Heart right ventricle (tissue), 16 donors: ENCODE measurements at regions of chr3 and their contacts with region 1.

Region 1: DNA sequence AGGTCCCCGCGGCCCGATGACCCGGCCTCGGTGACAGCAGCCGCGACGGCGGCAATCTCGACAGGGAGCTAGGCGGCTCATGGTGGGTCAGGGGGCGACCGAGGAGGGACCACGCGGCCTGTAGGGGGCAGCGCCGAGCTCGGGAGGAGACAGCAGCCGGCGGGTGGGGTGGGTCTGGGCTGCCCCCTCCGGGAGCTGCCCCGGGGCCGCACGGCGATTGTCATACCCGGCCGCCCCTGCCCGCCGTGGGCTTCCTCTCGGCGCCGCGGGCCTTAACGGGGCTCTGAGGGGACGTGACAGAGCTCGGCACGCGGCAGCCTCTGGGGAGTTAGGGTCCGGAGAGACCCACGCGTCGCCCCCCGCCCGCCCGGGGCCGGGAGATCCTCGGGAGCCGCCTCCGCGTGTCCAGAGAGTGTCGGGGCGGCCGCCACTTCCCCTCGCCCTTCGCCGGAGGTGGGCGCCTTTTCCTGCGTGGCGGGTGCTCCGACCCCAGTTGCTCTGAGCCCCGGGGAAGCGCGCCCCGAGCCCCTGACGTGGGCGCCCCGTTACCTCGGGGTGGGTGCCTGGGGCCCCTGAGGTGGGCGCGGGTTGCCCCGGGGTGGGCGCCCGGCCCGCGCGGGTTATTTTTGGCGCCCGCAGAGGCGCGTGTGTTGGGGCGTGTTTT is 539 bp upstream of the PLCL2 start:
- DNase-seq: peak; percentile 74 to 84
- ATAC-seq: peak; percentile 66 to 89 (median 78)
- H3K4me3 ChIP-seq: peak overlapping the region; percentile 76 to 97 (median 86)
- H3K27ac ChIP-seq: peak overlapping the region; percentile 85 to 98 (median 96)
- H3K4me1 ChIP-seq: peaks cover 6 to 65% (median 38%) of the 10 kb centered on the region in 9 donors
- H3K27me3 ChIP-seq: no peaks in the 10 kb centered on the region
- CTCF ChIP-seq: peak; percentile 50 to 79 (median 72)

Region 2: GRCh38 chr3:16768959-16769358 is 115.3 kb before region 1 on chr3:
- intact Hi-C with region 1: loop called in 2 of 10 experiments (anchors 5 to 10 kb)
- DNase-seq: no peak
- ATAC-seq: peak in 1 of 8 donors; percentile 18
- H3K4me3 ChIP-seq: no peak overlapping the region
- H3K27ac ChIP-seq: peak overlapping the region; percentile 40 to 90 (median 75)
- H3K4me1 ChIP-seq: peaks cover 0 to 43% (median 22%) of the 10 kb centered on the region in 9 donors
- H3K27me3 ChIP-seq: no peaks in the 10 kb centered on the region
- CTCF ChIP-seq: no peak

Region 3: DNA sequence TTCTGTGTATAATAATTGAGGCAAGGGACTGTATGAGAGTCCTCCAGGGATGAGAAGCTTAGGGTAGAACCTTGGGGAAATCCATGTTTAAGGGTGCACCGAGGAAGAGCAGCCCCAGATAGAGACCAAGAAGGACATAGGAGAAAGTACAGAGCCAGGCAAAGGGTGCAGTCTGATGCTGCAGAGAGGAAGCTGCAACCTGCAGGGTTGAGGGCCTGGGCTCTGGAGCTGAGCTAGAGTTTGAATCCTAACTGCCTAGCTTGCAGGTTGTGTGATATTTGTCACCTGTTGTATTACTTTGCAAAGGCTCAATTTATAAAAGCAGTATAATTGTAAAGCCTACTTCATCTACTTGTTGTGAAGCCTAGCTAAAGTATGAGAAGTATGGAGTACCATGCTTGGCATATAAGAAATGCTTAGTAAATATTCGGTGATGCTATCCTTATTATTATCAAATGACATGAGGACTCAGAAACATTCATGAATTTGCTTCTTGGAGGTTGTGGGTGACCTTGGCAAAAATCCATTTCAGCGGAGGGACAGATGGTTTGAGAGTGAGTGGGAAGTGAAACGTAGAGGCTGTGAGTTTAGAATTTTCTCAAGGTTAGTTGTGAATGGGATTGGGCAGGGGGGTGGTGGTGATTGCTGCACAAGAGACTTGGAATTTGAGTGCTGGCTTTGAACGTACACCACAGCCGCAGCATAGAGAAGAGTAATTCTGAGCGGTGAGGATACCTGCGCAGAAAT is 44.3 kb after region 1 on chr3:
- intact Hi-C with region 1: loop called in 1 of 10 experiments (anchors 2 kb)
- DNase-seq: no peak
- ATAC-seq: peak in 3 of 8 donors; percentile 15 to 42 (median 33)
- H3K4me3 ChIP-seq: no peak overlapping the region
- H3K27ac ChIP-seq: peak overlapping the region in 1 of 10 donors; percentile 3
- H3K4me1 ChIP-seq: peaks cover 0 to 55% (median 33%) of the 10 kb centered on the region in 9 donors
- H3K27me3 ChIP-seq: no peaks in the 10 kb centered on the region
- CTCF ChIP-seq: no peak

Region 4: GRCh38 chr3:17032407-17033034 is 148.3 kb after region 1 on chr3:
- intact Hi-C with region 1: loop called in 8 of 10 experiments (anchors 5 to 10 kb)
- DNase-seq: no peak
- ATAC-seq: peak in 7 of 8 donors; percentile 37 to 84 (median 66)
- H3K4me3 ChIP-seq: no peak overlapping the region
- H3K27ac ChIP-seq: no peak overlapping the region
- H3K4me1 ChIP-seq: peaks cover 0 to 37% (median 3%) of the 10 kb centered on the region in 9 donors
- H3K27me3 ChIP-seq: no peaks in the 10 kb centered on the region
- CTCF ChIP-seq: peak; percentile 45 to 77 (median 64)

Region 5: DNA sequence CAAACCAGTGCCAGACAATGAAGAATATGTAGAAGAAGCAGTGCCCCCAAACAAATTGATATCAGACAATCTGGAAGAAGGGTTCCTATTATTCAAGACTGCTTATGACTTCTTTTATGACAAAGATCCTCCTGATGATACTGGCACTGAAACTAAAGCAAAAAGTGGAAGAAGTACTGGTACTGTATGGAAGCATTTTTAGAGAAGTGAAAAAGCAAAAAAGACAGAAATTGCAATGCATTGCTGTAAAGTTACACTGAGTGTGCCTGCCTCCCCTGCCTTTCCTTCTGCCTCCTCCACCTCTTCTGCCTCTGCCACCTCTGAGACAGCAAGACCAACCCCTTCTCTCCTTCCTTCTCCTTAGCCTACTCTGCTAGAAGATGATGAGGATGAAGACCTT is 168.1 kb after region 1 on chr3:
- intact Hi-C with region 1: no loop called
- DNase-seq: no peak
- ATAC-seq: peak in 1 of 8 donors; percentile 31
- H3K4me3 ChIP-seq: no peak overlapping the region
- H3K27ac ChIP-seq: peak overlapping the region in 1 of 10 donors; percentile 8
- H3K4me1 ChIP-seq: peaks cover 0 to 47% (median 24%) of the 10 kb centered on the region in 9 donors
- H3K27me3 ChIP-seq: no peaks in the 10 kb centered on the region
- CTCF ChIP-seq: no peak

Region 6: DNA sequence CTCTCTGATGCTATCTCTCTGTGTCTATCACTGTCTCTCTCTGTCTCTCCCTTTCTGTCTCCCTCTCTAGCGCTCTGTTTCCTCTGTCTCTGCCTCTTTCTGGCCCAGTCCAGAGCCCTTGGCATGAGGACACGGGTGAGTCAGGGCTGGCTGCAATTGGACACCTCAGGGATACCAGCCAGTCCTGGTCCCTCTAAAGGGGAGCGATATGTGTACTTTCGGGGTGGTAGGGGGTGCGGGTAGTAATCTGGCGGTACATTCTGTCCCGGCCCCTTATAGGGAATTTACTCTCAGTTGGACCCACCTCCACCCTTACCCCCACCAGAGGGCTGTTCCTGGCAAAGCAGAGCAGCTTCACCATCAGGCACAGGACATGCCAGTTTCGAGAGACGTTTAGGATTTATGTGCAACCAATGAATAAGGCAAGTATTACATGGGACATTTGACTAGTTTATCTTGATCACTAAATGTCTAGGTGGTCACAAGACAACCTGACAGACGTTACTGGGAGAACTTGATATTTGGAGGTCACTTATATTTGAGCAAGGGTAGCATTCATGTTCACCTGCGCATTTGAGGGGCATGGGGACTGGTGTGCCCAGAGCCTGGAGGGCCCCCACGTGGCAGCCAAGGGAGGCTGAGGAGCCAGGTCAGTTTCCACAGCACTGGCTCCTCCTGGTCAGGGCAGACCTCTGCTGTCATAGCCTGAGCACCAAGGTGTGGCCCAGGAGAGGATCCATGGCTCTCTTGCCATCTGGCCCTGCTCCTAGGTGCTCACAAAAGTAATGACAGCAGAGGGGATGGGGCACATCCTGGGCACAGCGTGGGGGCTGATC is 256.7 kb after region 1 on chr3:
- intact Hi-C with region 1: loop called in 2 of 10 experiments (anchors 2 to 5 kb)
- DNase-seq: peak; percentile 49 to 50
- ATAC-seq: peak; percentile 61 to 88 (median 86)
- H3K4me3 ChIP-seq: peak overlapping the region in 1 of 10 donors; percentile 11
- H3K27ac ChIP-seq: peak overlapping the region in 9 of 10 donors; percentile 14 to 65 (median 60)
- H3K4me1 ChIP-seq: peaks cover 0 to 26% (median 6%) of the 10 kb centered on the region in 9 donors
- H3K27me3 ChIP-seq: no peaks in the 10 kb centered on the region
- CTCF ChIP-seq: peak in 8 of 9 donors; percentile 14 to 54 (median 30)